H1 (cell line): ENCODE measurements at regions of chr11 and their contacts with region 1.

Region 1: DNA sequence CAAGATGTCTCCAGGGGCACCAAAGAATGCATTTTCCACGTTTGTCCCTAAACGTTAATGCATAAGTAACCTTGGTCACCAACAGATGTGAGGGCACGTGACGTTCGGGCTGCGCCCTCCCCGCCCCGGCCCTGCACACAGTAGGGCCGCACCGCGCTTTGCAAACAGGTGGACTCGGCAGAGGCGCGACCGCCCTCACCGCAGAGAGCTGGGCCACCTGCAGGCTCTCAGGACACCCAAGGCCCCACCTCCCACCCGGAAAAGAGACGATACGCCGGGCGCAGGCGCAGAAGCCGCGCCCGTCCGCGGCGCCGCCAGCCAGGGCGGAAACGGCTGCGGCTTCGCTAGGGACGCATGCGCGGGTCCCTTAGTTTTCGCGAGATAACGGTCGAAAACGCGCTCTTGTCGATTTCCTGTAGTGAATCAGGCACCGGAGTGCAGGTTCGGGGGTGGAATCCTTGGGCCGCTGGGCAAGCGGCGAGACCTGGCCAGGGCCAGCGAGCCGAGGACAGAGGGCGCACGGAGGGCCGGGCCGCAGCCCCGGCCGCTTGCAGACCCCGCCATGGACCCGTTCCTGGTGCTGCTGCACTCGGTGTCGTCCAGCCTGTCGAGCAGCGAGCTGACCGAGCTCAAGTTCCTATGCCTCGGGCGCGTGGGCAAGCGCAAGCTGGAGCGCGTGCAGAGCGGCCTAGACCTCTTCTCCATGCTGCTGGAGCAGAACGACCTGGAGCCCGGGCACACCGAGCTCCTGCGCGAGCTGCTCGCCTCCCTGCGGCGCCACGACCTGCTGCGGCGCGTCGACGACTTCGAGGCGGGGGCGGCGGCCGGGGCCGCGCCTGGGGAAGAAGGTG is at the start of gene FADD:
- DNase-seq: peak; percentile 72 to 90
- H3K4me3 ChIP-seq: peak within 1 kb of the TSS; percentile 86 to 90 (median 86)
- H3K27ac ChIP-seq: peak within 1 kb of the TSS; percentile 74
- H3K4me1 ChIP-seq: peaks cover 7 to 17% (median 9%) of the 10 kb centered on the region in 4 experiments
- H3K27me3 ChIP-seq: no peaks in the 10 kb centered on the region
- CTCF ChIP-seq: no peak
- EP300 ChIP-seq: no peak
- POLR2A ChIP-seq: peak in 1 of 2 experiments; percentile 40; a peak in 1 of 3 replicates
- RAD21 ChIP-seq: no peak; a peak in 1 of 4 replicates
- total RNA-seq, gene FADD: 43.8 and 43.9 TPM in 2 replicates

Region 2: DNA sequence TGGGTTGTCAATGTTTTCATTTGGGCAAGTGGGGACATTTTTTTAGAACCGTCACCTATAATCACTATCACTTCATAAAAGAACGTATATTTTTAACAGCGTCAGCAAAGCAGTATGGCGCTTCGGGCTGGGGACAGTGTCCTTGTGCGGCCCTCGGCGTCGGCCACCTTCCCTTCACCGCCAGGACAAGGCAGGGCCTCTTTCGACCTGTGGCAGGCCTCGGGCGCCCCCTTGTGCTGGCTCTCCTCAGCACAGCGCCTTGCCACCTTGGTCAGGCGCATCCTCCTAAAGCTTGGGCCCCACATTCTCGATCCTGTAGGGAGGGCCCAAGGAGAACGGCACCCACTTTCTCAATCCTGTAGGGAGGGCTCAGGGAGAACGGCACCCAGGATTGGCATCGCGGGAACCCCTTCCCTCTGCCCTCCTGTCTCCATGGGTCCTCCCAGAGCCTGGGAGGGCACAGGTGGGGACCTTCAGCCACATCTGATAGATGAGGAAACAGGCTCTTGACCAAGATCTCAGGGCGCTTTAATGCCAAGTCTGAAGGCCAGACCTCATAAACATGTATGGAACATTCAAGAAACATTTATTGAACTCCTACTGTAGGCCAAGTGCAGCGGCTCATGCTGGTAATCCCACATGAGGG is 11.5 kb before region 1 on chr11:
- CTCF ChIA-PET with region 1: interaction called, 39 read pairs
- POLR2A ChIA-PET with region 1: no interaction called
- DNase-seq: peak; percentile 59 to 97
- H3K4me3 ChIP-seq: no peak overlapping the region
- H3K27ac ChIP-seq: no peak overlapping the region
- H3K4me1 ChIP-seq: no peaks in the 10 kb centered on the region
- H3K27me3 ChIP-seq: no peaks in the 10 kb centered on the region
- CTCF ChIP-seq: peak; percentile 94 to 99 (median 98)
- EP300 ChIP-seq: no peak
- POLR2A ChIP-seq: no peak
- RAD21 ChIP-seq: peak; percentile 98 to 100